CD4-positive, alpha-beta memory T cell (primary cell): ENCODE measurements at regions of chr1 and their contacts with region 1.

Region 1: GRCh38 chr1:206912445-206913095 is 9.2 kb downstream of the FCMR start:
- DNase-seq: peak; percentile 67 to 71 (median 68)
- H3K4me3 ChIP-seq: no peak overlapping the region
- H3K4me3 Mint-ChIP-seq: peak overlapping the region; percentile 21 to 68 (median 54)
- H3K27ac ChIP-seq: peak overlapping the region; percentile 29
- H3K27ac Mint-ChIP-seq: peak overlapping the region; percentile 71 to 93 (median 92)
- H3K4me1 ChIP-seq: peaks cover 98% of the 10 kb centered on the region
- H3K4me1 Mint-ChIP-seq: peaks cover 76 to 96% (median 87%) of the 10 kb centered on the region in 4 donors
- H3K27me3 ChIP-seq: no peaks in the 10 kb centered on the region
- H3K27me3 Mint-ChIP-seq: no peaks in the 10 kb centered on the region

Region 2: GRCh38 chr1:206469933-206470691 is 442.5 kb before region 1 on chr1 and contains the start of gene IKBKE:
- CTCF ChIA-PET with region 1: no interaction called
- POLR2A ChIA-PET with region 1: no interaction called
- intact Hi-C with region 1: loop called (anchors 10 kb)
- DNase-seq: peak; percentile 44 to 69 (median 47)
- H3K4me3 ChIP-seq: peak within 1 kb of the TSS; percentile 99
- H3K4me3 Mint-ChIP-seq: peak within 1 kb of the TSS; percentile 84 to 97 (median 93)
- H3K27ac ChIP-seq: peak within 1 kb of the TSS; percentile 80
- H3K27ac Mint-ChIP-seq: peak within 1 kb of the TSS; percentile 64 to 95 (median 92)
- H3K4me1 ChIP-seq: peaks cover 86% of the 10 kb centered on the region
- H3K4me1 Mint-ChIP-seq: peaks cover 54 to 91% (median 79%) of the 10 kb centered on the region in 4 donors
- H3K27me3 ChIP-seq: no peaks in the 10 kb centered on the region
- H3K27me3 Mint-ChIP-seq: no peaks in the 10 kb centered on the region
- total RNA-seq, gene IKBKE: 81.8 to 92.3 TPM

Region 3: DNA sequence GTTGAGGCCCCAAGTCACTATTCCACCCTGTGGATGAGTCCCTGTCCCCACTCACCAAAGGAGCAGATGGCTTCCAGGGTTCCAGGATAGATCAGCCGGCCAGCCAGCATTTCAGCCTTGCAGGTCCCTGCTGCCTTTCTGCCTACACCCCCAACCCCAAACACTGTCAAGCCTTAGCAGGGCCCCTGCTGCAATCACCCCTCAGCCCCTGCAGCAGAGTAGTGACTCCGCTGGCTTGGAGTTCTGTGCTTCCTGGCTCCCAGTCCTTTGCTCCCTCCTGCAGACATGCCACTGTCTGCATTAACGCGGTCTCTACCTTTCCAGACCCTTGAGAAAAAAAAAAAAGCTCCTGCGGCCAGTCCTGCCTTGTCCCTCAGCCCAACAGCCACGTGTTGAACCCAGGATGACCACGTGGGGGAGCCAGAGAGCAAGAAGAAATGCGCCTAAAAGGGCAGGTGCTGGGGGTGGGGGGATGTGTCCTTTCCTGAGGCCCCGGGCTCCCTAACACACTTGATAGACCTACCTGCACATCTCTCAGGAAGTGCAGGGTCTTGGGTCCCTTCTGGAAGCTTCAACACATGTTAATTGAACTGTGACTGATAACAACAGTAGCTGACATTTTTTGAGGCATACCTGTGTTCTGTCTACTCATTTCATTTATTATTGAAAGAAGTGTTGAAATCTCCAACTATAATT is 367.9 kb before region 1 on chr1:
- CTCF ChIA-PET with region 1: no interaction called
- POLR2A ChIA-PET with region 1: no interaction called
- intact Hi-C with region 1: no loop called
- DNase-seq: peak; percentile 66 to 83 (median 76)
- H3K4me3 ChIP-seq: no peak overlapping the region
- H3K4me3 Mint-ChIP-seq: peak overlapping the region in 2 of 8 donors; percentile 6 to 52
- H3K27ac ChIP-seq: no peak overlapping the region
- H3K27ac Mint-ChIP-seq: peak overlapping the region in 5 of 7 donors; percentile 27 to 77 (median 60)
- H3K4me1 ChIP-seq: peaks cover 10% of the 10 kb centered on the region
- H3K4me1 Mint-ChIP-seq: peaks cover 5 to 15% (median 11%) of the 10 kb centered on the region in 4 donors
- H3K27me3 ChIP-seq: no peaks in the 10 kb centered on the region
- H3K27me3 Mint-ChIP-seq: no peaks in the 10 kb centered on the region

Region 4: DNA sequence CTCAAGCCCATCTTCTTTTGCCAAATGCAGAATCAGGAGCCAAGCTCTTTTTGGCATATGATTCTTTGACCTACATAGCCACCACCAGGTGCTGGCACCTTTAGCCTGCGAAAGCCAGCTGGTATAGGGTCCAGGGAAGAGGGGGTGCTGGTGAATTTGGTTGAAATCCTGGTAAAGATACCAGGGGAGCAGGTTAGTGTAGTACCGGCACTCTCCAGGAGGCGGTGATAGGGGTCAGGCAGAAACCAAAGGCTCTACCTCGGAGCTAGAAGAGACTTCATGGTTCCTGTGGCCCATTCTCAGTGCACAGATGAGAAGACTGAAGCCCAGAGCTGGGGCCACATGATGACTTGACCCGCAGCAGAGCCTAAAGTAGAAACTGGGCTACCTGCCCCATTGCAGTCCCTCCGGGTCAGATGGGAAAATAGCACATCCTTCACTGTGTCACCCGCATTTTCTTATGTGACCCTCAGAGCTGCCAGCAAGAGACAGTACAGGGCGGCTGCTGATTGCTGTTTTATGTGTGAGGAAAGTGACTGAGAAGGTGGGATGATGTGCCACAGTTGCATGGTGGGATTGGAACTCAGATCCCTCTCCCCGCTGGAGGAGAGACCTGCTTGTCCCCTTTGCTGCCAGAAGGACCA is 177.9 kb before region 1 on chr1:
- CTCF ChIA-PET with region 1: interaction called, 106 read pairs
- POLR2A ChIA-PET with region 1: interaction called, 25 read pairs
- intact Hi-C with region 1: loop called (anchors 1 kb)
- DNase-seq: peak; percentile 64 to 82 (median 71)
- H3K4me3 ChIP-seq: no peak overlapping the region
- H3K4me3 Mint-ChIP-seq: peak overlapping the region in 3 of 8 donors; percentile 23 to 76 (median 54)
- H3K27ac ChIP-seq: peak overlapping the region; percentile 53
- H3K27ac Mint-ChIP-seq: peak overlapping the region; percentile 92 to 97 (median 94)
- H3K4me1 ChIP-seq: peaks cover 56% of the 10 kb centered on the region
- H3K4me1 Mint-ChIP-seq: peaks cover 47 to 56% (median 52%) of the 10 kb centered on the region in 4 donors
- H3K27me3 ChIP-seq: no peaks in the 10 kb centered on the region
- H3K27me3 Mint-ChIP-seq: no peaks in the 10 kb centered on the region

Region 5: DNA sequence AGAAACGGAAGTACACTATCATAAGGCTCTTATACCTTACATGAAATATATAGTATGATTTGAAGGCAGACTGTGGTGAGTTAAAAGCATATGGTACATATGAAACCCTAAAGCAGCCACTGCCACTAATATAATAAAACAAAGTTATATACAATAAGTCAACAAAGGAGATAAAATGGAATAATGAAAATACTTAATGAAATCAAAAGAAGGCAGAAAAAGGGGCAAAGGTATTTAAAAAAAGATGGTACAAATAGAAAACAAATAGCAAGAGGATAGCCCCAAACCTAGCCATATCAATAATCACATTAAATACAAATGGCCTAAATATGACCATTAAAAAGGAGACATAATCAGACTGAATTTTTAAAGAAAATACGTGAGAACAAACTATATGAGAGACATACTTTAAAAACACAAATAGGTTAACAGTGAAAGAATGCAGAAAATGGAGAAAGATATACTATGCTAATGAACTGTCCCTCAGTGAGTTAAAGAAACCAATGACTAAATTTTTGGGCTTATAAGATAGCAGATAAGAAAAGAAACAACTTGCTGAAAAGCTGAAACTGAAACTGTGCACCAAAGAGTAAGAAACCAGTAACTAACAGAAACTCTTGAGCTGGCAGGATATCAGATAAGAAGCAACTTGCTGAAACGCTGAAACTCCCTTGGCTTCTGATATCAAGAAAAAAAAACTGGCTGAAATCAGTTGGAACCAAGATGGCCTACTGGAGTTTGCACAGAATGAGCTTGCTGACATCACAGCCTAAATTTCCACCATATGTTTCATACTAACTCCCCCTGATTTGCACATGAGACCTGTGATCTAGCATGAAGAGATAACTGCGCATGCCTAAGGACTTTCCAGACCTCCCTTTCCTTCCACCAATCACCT is 95.9 kb before region 1 on chr1:
- CTCF ChIA-PET with region 1: interaction called, 85 read pairs
- POLR2A ChIA-PET with region 1: interaction called, 6 read pairs
- intact Hi-C with region 1: no loop called
- DNase-seq: peak; percentile 53 to 75 (median 68)
- H3K4me3 ChIP-seq: no peak overlapping the region
- H3K4me3 Mint-ChIP-seq: peak overlapping the region; percentile 7 to 67 (median 55)
- H3K27ac ChIP-seq: peak overlapping the region; percentile 40
- H3K27ac Mint-ChIP-seq: peak overlapping the region; percentile 74 to 92 (median 88)
- H3K4me1 ChIP-seq: peaks cover 19% of the 10 kb centered on the region
- H3K4me1 Mint-ChIP-seq: peaks cover 17 to 19% (median 19%) of the 10 kb centered on the region in 4 donors
- H3K27me3 ChIP-seq: no peaks in the 10 kb centered on the region
- H3K27me3 Mint-ChIP-seq: no peaks in the 10 kb centered on the region

Region 6: GRCh38 chr1:206878456-206878855 is 34.1 kb before region 1 on chr1:
- CTCF ChIA-PET with region 1: interaction called, 15 read pairs
- POLR2A ChIA-PET with region 1: interaction called, 3 read pairs
- intact Hi-C with region 1: no loop called
- DNase-seq: no peak
- H3K4me3 ChIP-seq: no peak overlapping the region
- H3K4me3 Mint-ChIP-seq: no peak overlapping the region
- H3K27ac ChIP-seq: no peak overlapping the region
- H3K27ac Mint-ChIP-seq: no peak overlapping the region
- H3K4me1 ChIP-seq: no peaks in the 10 kb centered on the region
- H3K4me1 Mint-ChIP-seq: no peaks in the 10 kb centered on the region
- H3K27me3 ChIP-seq: no peaks in the 10 kb centered on the region
- H3K27me3 Mint-ChIP-seq: peaks cover 3 to 7% of the 10 kb centered on the region in 2 donors

Region 7: GRCh38 chr1:206930210-206930798 is 17.7 kb after region 1 on chr1:
- CTCF ChIA-PET with region 1: interaction called, 477 read pairs
- POLR2A ChIA-PET with region 1: interaction called, 179 read pairs
- intact Hi-C with region 1: loop called (anchors 1 kb)
- DNase-seq: no peak
- H3K4me3 ChIP-seq: no peak overlapping the region
- H3K4me3 Mint-ChIP-seq: peak overlapping the region; percentile 2 to 70 (median 54)
- H3K27ac ChIP-seq: no peak overlapping the region
- H3K27ac Mint-ChIP-seq: peak overlapping the region; percentile 81 to 93 (median 88)
- H3K4me1 ChIP-seq: peaks cover 39% of the 10 kb centered on the region
- H3K4me1 Mint-ChIP-seq: peaks cover 25 to 55% (median 34%) of the 10 kb centered on the region in 4 donors
- H3K27me3 ChIP-seq: no peaks in the 10 kb centered on the region
- H3K27me3 Mint-ChIP-seq: no peaks in the 10 kb centered on the region